GM10248 (cell line): ENCODE measurements at regions of chr12 and their contacts with region 1.

Region 1: DNA sequence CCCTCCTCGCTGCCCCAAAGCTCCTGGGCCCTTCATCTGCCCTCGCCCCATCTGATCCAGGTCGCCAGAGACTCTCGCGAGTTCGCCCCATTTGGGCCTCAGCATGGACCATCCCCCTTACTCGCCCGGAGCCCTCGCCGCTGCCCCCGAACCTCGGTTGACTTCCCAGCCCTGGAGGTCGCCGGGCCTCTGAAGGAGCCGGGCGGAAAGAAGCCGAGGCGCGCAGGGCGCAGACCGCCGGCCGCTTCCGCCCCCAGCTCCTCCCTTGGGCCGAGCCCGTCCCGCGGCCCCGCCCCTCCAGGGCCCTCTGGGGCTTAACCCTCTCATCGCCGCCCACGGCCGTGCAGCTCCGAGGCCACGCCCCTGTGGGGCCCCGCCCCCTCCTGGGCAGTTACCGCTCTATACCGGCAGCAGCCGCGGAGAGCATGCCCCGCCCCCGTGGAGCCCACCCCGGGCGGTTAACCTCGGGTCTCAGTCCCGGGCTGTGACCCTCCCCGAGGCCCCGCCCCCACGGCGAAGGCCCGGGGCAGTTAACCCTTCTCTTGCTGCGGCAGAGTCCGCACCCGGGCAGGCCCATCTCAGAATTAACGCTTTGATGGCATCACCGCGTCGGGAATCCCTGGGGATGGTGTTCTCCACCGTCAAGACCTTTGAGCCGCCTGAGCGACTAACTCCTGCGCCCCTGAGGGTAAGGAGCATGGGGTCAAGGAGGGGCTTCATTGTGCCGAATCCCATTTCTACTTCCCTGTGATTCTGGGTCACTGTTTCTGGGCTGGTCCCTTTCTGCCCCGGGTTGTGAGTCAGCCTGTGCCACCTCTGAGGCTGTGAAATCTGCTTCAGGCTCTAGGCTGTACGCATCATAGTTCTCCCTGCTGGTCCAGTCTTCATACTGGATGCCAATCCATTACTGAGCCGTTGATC is at the start of gene SPSB2:
- DNase-seq: peak; percentile 98
- CTCF ChIP-seq: no peak

Region 2: DNA sequence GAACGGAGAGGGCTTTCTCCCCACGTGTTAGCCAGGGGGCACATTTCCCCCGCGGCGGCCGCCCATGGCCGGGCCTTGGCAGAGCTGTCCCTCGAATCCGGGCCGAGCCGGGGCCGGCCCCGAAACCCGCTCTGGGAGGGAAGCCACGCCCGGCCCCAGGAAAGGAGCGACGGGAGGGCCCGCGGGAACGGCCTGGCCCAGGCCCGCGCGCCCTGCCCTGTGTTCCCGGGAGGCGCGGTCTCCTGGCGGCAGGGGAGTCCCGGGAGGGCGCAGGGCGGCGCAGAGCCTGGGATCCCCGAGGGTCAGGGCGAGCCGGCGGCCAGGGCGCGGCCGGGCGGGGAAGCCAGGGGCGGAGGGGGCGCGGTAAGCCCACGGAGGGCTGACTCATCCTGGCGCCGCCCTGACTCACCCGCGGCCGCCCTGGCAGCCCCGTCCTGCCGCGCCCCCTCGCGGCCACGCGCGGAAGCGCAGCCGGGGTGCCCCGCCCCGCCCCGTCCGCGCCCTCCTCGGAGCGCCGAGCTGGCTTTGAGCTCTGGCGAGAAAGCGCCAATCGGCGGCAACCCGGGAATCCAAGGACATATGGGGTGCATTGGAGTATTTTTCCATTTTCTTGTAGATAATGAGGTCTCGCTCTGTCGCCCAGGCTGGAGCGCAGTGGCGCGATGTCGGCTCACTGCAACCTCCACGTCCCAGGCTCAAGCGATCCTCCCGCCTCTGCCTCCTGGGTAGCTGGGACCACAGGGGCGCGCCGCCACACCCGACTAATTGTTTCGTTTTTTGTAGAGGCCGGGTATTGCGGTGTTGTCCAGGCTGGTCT is 594.7 kb before region 1 on chr12:
- CTCF ChIA-PET with region 1: no interaction called
- POLR2A ChIA-PET with region 1: no interaction called
- DNase-seq: peak; percentile 91
- CTCF ChIP-seq: peak; percentile 88

Region 3: GRCh38 chr12:6695313-6696045 is 177.9 kb before region 1 on chr12:
- CTCF ChIA-PET with region 1: no interaction called
- POLR2A ChIA-PET with region 1: no interaction called
- DNase-seq: no peak
- CTCF ChIP-seq: no peak

Region 4: DNA sequence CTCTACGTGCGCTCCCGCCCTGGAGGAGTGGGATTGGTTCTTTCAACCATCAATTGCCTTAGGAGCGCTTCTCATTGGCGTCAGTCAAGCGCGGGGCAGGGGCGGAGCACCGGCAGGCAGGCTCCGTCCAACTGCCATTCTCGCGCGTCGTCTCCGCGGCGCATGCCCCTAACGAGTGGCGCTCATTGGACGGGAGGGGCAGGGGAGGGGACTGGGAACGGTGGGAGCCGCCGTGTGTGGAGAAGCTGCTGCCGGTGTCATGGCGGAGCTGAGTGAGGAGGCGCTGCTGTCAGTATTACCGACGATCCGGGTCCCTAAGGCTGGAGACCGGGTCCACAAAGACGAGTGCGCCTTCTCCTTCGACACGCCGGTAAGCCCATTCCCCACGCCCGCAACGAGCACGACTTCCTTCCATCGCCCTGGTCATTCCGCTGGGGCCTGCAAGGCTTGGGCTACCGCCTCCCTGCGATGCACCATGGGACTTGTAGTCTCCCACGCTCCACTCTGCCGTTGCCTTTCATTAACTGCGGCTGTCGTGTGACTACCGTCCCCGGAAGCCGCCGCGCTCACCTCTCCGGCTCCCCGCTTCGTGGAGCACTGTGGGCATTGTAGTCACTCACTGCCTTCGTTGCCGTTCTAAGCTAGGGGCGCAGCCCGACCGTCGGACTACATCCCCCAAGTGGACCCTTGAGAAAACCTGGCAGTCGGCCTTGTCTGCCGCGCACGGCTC is 21.3 kb before region 1 on chr12 and contains the start of gene USP5:
- CTCF ChIA-PET with region 1: interaction called, 130 read pairs
- POLR2A ChIA-PET with region 1: interaction called, 89 read pairs
- DNase-seq: peak; percentile 95
- CTCF ChIP-seq: no peak

Region 5: DNA sequence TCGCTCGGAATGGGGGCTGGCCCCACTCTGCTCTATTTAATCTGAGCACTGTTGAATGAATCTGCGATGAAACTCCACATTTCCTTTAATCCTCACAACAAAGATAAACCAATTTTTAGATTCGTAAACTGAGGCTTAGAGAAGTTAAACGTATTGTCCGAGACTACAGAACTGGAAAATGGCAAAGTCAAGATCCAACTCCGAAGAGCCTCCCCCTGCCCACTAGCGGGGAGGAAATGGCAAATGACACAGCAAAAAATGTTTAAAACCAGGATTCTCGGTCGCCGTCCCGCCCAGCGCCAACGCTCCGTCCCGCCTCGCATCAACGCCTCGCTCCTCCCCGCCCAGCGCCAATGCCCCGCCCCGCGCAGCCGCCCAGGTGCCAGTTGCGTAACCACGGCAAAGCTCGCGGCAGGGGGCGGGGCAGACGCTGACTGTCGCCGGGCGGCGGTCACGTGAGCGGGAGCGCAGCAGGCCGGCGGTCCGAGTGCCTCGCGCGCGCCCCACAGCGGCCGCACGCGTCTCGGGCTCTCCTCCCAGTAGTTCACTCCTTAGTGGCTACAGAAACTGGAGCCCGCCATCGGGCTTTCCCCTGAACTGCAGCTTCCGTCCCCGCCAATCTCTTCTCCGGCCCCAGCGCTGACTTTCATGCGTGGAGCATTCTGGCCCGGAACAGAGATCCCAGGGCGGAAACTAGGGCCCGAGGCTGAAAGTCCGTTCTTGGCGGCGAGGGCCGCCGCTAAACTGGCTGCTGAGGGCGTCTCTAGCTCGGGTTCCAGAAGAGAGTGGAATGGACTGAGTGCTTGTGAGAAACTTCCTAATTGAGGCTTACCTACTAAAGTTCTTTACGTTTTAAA is 17.7 kb after region 1 on chr12:
- CTCF ChIA-PET with region 1: interaction called, 50 read pairs
- POLR2A ChIA-PET with region 1: interaction called, 21 read pairs
- DNase-seq: peak; percentile 98
- CTCF ChIP-seq: peak; percentile 85

Region 6: GRCh38 chr12:6914246-6914946 is 41.0 kb after region 1 on chr12 and contains the start of gene ENO2:
- CTCF ChIA-PET with region 1: interaction called, 13 read pairs
- POLR2A ChIA-PET with region 1: interaction called, 5 read pairs
- DNase-seq: peak; percentile 89
- CTCF ChIP-seq: no peak

Region 7: DNA sequence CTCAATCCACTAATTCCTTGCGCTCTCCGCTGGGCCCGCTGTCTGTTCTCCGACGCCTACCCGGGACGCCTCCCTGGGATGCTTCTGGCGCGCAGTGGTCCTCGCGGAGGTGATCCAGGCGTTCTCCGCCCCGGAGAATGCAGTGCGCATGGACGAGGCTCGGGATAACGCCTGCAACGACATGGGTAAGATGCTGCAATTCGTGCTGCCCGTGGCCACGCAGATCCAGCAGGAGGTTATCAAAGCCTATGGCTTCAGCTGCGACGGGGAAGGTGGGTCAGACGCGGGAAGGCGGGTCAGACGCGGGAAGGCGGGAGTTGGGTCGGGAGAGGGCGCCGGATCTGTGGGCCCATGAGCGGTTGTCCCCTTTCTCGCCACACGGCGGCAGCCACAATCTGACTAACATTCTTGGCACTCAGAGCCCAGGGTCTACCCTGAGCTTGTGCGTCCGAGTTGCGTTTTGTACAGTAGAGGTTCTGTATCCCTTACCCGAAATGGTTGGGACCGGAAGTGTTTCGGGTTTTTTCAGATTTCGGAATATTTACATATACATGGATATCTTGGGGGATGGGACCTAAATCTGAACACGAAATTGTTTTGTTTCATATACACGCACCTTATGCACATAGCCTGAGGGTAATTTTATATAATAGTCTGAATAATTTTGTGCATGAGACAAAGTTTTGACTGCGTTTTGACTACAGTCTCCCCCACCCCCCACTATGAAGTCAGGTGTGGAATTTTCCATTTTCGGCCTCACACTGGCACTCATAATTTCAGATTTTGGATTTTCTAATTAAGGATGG is 71.2 kb after region 1 on chr12:
- CTCF ChIA-PET with region 1: interaction called, 13 read pairs
- POLR2A ChIA-PET with region 1: interaction called, 11 read pairs
- DNase-seq: peak; percentile 79
- CTCF ChIP-seq: peak; percentile 94